CD14-positive monocyte (primary cell): ENCODE measurements at regions of chr5 and their contacts with region 1.

Region 1: DNA sequence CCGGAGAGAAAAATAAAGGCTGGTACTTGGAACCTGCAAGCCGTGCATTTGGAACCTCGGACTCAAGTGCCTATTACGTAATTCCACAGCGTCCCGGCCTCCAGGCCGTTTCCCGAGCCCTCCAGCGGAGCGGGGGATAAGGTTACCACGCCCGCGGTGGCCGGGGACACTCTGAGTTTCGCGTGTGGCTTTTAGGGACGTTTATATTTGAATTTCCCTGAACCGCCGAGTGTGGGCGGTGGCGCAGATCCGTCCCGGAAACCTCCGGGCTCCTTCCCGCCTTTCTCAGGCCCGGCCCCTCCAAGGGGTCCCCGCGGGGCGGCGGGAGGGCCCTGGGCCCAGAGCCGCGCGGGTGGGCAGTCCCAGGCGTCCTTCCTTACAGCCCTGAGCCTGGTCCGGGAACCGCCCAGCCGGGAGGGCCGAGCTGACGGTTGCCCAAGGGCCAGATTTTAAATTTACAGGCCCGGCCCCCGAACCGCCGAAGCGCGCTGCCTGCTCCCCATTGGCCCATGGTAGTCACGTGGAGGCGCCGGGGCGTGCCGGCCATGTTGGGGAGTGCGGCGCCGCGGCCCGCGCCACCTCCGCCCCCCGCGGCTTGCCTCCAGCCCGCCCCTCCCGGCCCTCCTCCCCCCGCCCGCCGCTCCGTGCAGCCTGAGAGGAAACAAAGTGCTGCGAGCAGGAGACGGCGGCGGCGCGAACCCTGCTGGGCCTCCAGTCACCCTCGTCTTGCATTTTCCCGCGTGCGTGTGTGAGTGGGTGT is at the start of gene LMNB1:
- DNase-seq: peak; percentile 90 to 94 (median 92)
- H3K4me3 ChIP-seq: peak within 1 kb of the TSS; percentile 73 to 94 (median 84)
- H3K4me3 Mint-ChIP-seq: peak within 1 kb of the TSS; percentile 91 to 96
- H3K27ac ChIP-seq: peak within 1 kb of the TSS; percentile 87 to 92
- H3K27ac Mint-ChIP-seq: peak within 1 kb of the TSS; percentile 92 to 97 (median 95)
- H3K4me1 ChIP-seq: peaks cover 38 to 47% of the 10 kb centered on the region in 2 donors
- H3K4me1 Mint-ChIP-seq: peaks cover 38% of the 10 kb centered on the region
- H3K27me3 ChIP-seq: no peaks in the 10 kb centered on the region
- H3K27me3 Mint-ChIP-seq: peaks cover 0 to 2% (median 0%) of the 10 kb centered on the region in 3 donors
- CTCF ChIP-seq: no peak
- polyA plus RNA-seq, gene LMNB1: 18.0 to 33.0 (median 28.2) TPM

Region 2: DNA sequence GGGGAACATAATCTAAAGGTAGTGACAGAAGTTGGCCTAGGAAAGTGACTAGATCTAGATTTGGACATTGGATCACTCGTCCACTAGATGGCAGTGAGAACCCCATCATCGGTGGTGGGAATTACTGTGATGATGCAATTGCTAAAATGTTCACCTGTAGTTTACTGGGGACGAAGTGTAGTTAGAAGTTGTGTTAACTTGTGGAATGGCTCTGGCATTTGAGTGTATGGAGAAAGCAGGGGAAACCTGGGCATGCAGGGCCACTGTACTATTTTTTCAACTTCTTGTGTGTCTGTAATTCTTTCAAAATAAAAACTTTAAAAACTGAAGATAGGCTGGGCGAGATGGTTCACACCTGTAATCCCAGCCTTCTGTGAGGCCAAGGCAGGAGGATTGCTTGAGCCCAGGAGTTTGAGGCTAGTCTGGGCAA is 100.5 kb before region 1 on chr5:
- intact Hi-C with region 1: loop called (anchors 2 kb)
- DNase-seq: peak; percentile 53 to 82 (median 74)
- H3K4me3 ChIP-seq: no peak overlapping the region
- H3K4me3 Mint-ChIP-seq: peak overlapping the region in 1 of 2 donors; percentile 41
- H3K27ac ChIP-seq: no peak overlapping the region
- H3K27ac Mint-ChIP-seq: peak overlapping the region in 3 of 7 donors; percentile 10 to 70 (median 70)
- H3K4me1 ChIP-seq: peaks cover 25 to 26% of the 10 kb centered on the region in 2 donors
- H3K4me1 Mint-ChIP-seq: peaks cover 34% of the 10 kb centered on the region
- H3K27me3 ChIP-seq: no peaks in the 10 kb centered on the region
- H3K27me3 Mint-ChIP-seq: peaks cover 0 to 3% (median 1%) of the 10 kb centered on the region in 3 donors
- CTCF ChIP-seq: peak; percentile 90

Region 3: DNA sequence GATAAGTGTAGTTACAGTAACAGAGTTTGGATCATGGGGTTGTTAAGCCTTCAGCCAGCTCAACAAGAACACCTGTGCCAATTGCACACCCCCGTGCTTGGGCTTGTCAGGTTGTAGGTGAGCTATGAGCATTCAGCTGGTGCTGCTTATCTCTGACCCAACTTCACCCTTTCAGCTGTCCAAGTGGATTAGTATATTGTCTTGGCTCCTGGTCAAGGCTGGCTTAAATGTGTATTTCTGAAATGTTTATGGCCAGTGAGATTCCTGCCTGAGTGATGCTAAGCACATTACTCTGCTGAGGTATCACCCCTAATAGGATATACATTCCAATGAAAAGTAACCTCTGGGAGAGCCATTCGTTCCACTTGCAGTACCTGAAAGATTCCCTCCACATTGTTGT is 44.0 kb before region 1 on chr5:
- intact Hi-C with region 1: loop called in 1 of 2 experiments (anchors 5 kb)
- DNase-seq: no peak
- H3K4me3 ChIP-seq: no peak overlapping the region
- H3K4me3 Mint-ChIP-seq: no peak overlapping the region
- H3K27ac ChIP-seq: no peak overlapping the region
- H3K27ac Mint-ChIP-seq: no peak overlapping the region
- H3K4me1 ChIP-seq: peaks cover 15 to 17% of the 10 kb centered on the region in 2 donors
- H3K4me1 Mint-ChIP-seq: peaks cover 14% of the 10 kb centered on the region
- H3K27me3 ChIP-seq: no peaks in the 10 kb centered on the region
- H3K27me3 Mint-ChIP-seq: peaks cover 0 to 6% (median 0%) of the 10 kb centered on the region in 3 donors
- CTCF ChIP-seq: no peak

Region 4: DNA sequence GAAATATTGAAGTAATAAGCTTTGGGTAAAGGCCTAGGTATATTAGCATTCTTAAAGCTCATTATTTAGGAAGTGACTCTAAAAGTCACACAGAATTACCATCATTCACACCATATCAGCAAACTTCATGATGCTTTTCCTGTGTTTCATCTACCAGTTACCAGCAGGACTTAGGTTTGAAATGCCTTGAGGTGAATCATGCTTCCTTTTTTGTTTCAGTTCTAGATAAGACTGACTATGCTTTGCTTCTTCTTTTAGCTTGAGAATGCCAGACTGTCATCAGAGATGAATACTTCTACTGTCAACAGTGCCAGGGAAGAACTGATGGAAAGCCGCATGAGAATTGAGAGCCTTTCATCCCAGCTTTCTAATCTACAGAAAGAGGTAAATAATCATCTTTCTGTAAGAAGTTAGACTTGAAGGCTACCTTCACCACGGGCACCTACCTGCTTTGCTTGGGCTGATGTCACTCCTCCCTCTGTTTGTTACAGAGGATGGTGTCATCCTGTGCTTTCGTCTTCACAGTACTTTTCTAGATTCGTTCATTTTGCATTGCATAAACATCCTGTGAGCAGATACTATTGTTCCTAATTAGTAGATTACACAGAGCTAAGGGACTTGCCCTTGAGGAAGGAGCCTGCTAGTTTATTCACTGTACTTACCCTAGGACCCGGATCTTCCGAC is 35.0 kb after region 1 on chr5:
- intact Hi-C with region 1: loop called in 1 of 2 experiments (anchors 5 kb)
- DNase-seq: peak; percentile 80 to 92 (median 91)
- H3K4me3 ChIP-seq: peak overlapping the region in 1 of 3 experiments; percentile 24
- H3K4me3 Mint-ChIP-seq: no peak overlapping the region
- H3K27ac ChIP-seq: peak overlapping the region; percentile 79 to 94
- H3K27ac Mint-ChIP-seq: peak overlapping the region; percentile 88 to 99 (median 97)
- H3K4me1 ChIP-seq: peaks cover 82 to 92% of the 10 kb centered on the region in 2 donors
- H3K4me1 Mint-ChIP-seq: peaks cover 76% of the 10 kb centered on the region
- H3K27me3 ChIP-seq: no peaks in the 10 kb centered on the region
- H3K27me3 Mint-ChIP-seq: peaks cover 0 to 1% (median 0%) of the 10 kb centered on the region in 3 donors
- CTCF ChIP-seq: no peak